BJ (cell line): ENCODE measurements at regions of chr6 and their contacts with region 1.

Region 1: DNA sequence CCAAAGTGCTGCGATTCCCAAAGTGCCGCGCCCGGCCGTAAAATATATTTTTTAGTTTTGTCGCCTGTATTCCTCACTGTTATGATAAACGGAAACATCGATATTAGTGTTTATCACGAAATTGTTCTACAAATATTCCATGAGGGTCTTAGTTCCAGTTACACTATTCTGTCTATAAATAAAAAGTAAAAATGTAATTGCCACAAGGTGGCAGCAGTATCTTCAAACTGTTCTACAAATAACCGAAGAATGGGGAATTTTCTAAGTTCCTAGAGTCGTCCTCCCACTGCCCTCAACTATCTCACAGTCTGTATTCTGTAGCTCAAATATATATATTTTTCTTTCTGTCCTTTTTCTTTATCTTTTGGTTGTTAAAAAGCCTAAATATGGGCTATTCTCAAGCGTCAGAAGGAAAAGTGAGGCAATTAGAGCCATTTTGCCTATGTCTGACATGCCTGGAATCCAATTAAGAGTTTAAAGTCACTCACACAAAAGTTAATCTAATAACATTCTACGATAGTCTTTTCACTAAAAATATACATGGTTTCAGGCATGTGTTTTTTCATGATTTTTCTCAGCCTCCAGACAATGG is 14.2 kb upstream of the FAM162B start:
- DNase-seq: no peak
- H3K4me3 ChIP-seq: no peak overlapping the region
- H3K27me3 ChIP-seq: no peaks in the 10 kb centered on the region
- CTCF ChIP-seq: peak; percentile 36

Region 2: DNA sequence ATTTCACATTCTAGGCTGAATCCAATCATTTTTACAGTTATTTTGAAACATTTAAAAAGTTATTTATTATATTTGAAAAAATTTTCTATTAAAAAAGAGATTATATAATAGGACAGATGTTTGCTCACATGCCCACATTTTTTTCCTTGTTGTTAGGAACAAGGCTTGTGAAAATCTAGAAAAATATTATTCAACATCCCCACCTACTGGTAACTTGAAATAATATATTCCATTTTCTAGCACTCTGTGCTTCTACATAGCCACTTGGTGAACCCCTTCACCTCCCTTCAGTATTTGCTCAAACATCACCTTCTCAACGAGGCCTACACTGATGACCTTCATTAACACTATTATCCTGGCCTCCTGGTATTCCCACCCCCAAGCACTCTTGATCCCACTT is 67.6 kb after region 1 on chr6:
- CTCF ChIA-PET with region 1: interaction called, 12 read pairs
- POLR2A ChIA-PET with region 1: no interaction called
- DNase-seq: no peak
- H3K4me3 ChIP-seq: no peak overlapping the region
- H3K27me3 ChIP-seq: no peaks in the 10 kb centered on the region
- CTCF ChIP-seq: 0 out of 2 replicates have a peak, but pooled peaks have one; percentile 16